Activated T-helper 2 cell treated with anti-CD3 and anti-CD28 coated beads, Interferon-gamma antibody, Interleukin-2, Interleukin-4, amounts not matched to agents 10 μg/mL and 5 μg/mL and 100 μg/mL, durations not matched to agents 14 hours and 24 hours and 36 hours (primary cell): ENCODE measurements at regions of chr18 and their contacts with region 1.

Region 1: DNA sequence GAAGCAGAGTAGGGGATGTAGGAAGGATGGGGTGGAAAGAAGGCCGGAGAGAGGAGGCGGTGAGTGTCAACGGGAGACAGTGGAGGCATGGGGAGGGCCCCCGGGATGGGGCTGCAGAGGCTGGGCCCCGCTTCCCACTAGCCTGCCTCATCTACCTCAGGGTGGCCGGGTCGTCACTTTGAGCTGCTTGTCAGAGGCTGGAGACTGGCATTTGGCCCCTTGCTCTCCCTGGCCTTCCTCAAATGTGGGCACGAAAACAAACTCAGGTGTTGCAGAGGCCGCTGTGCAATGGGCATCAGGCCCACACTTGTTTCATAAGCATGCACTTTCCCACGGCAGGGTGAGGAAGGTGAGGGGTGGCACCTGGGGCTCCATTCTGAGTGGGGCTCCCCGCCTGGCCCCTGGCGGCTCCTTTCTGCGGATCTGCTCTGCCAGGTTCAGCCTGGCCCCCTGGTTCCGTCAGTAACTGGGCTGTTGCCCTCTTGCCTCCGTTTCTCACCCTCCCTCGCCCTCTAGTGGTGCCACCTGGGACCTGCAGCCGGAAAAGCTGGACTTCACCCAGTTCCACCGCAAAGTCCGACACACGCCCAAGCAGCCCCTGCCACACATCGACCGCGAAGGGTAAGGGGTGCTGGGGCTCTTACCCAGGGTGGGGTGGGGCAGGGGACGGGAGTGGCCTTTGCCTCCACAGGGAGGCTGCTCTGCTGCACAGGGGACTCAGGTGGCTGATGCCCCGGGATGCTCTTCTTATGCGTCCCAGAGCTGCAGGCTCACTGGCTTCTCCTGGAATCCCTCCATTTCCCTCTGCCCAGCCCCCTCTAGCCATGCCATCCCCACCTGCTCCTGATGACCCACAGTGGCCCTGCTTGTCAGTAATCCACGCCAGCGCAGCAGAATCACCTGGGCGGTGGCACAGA is 125.4 kb downstream of the CTIF start:
- DNase-seq: peak; percentile 30
- H3K4me3 Mint-ChIP-seq: no peak overlapping the region
- H3K27ac Mint-ChIP-seq: no peak overlapping the region
- H3K4me1 Mint-ChIP-seq: no peaks in the 10 kb centered on the region
- H3K27me3 Mint-ChIP-seq: peaks cover 10% of the 10 kb centered on the region

Region 2: GRCh38 chr18:48475635-48476549 is 188.3 kb before region 1 on chr18:
- intact Hi-C with region 1: loop called (anchors 1 kb)
- DNase-seq: no peak
- H3K4me3 Mint-ChIP-seq: no peak overlapping the region
- H3K27ac Mint-ChIP-seq: no peak overlapping the region
- H3K4me1 Mint-ChIP-seq: no peaks in the 10 kb centered on the region
- H3K27me3 Mint-ChIP-seq: peaks cover 45% of the 10 kb centered on the region